HepG2 (cell line): ENCODE measurements at regions of chr15 and their contacts with region 1.

Region 1: DNA sequence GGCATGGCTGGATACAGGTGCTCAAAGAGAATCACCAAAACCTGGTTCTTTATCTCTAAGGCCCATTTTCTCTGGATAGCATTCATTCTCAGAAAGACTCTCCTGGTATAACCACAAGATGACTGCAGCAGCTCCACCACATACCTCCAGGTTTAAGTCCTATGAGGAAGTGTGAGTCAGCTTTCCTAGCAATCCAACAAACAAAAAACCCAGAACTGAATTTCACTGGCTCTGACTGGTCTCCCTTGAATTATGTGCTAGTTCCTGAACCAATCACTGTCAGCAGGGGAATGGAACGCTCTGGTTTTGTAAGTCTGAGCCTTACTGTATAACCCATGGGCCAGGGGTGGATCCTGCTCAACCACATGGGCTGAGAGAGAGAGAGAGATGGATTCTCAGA is 27.2 kb downstream of the MRPL46 start:
- DNase-seq: no peak
- ATAC-seq: no peak
- H3K4me3 ChIP-seq: no peak overlapping the region
- H3K27ac ChIP-seq: no peak overlapping the region
- H3K4me1 ChIP-seq: no peaks in the 10 kb centered on the region
- H3K27me3 ChIP-seq: no peaks in the 10 kb centered on the region
- CTCF ChIP-seq: no peak
- EP300 ChIP-seq: no peak
- POLR2A ChIP-seq: no peak
- RAD21 ChIP-seq: no peak

Region 2: GRCh38 chr15:88246666-88247446 is 193.2 kb before region 1 on chr15:
- CTCF ChIA-PET with region 1: no interaction called
- POLR2A ChIA-PET with region 1: no interaction called
- in situ Hi-C with region 1: loop called (anchors 10 kb)
- intact Hi-C with region 1: no loop called
- DNase-seq: peak; percentile 44
- ATAC-seq: peak; percentile 93
- H3K4me3 ChIP-seq: no peak overlapping the region
- H3K27ac ChIP-seq: no peak overlapping the region
- H3K4me1 ChIP-seq: no peaks in the 10 kb centered on the region
- H3K27me3 ChIP-seq: peaks cover 3 to 4% of the 10 kb centered on the region in 2 experiments; a peak in 2 of 5 replicates
- CTCF ChIP-seq: peak; percentile 92
- EP300 ChIP-seq: no peak
- POLR2A ChIP-seq: no peak
- RAD21 ChIP-seq: peak; percentile 66

Region 3: GRCh38 chr15:88393719-88394519 is 46.1 kb before region 1 on chr15:
- CTCF ChIA-PET with region 1: no interaction called
- POLR2A ChIA-PET with region 1: no interaction called
- in situ Hi-C with region 1: no loop called
- intact Hi-C with region 1: loop called (anchors 10 kb)
- DNase-seq: no peak
- ATAC-seq: no peak
- H3K4me3 ChIP-seq: no peak overlapping the region
- H3K27ac ChIP-seq: no peak overlapping the region
- H3K4me1 ChIP-seq: peaks cover 30% of the 10 kb centered on the region
- H3K27me3 ChIP-seq: no peaks in the 10 kb centered on the region
- CTCF ChIP-seq: no peak
- EP300 ChIP-seq: no peak
- POLR2A ChIP-seq: no peak
- RAD21 ChIP-seq: no peak

Region 4: GRCh38 chr15:88649286-88649733 is 209.3 kb after region 1 on chr15:
- CTCF ChIA-PET with region 1: no interaction called
- POLR2A ChIA-PET with region 1: no interaction called
- in situ Hi-C with region 1: no loop called
- intact Hi-C with region 1: no loop called
- DNase-seq: peak; percentile 41
- ATAC-seq: no peak
- H3K4me3 ChIP-seq: no peak overlapping the region
- H3K27ac ChIP-seq: no peak overlapping the region
- H3K4me1 ChIP-seq: peaks cover 7% of the 10 kb centered on the region; the same call in 1 of the 2 replicates
- H3K27me3 ChIP-seq: no peaks in the 10 kb centered on the region; a peak in 1 of 5 replicates
- CTCF ChIP-seq: no peak
- EP300 ChIP-seq: no peak
- POLR2A ChIP-seq: no peak
- RAD21 ChIP-seq: no peak